Activated CD4-positive, alpha-beta T cell treated with anti-CD3 and anti-CD28 coated beads for 36 hours (primary cell): ENCODE measurements at regions of chr3 and their contacts with region 1.

Region 1: DNA sequence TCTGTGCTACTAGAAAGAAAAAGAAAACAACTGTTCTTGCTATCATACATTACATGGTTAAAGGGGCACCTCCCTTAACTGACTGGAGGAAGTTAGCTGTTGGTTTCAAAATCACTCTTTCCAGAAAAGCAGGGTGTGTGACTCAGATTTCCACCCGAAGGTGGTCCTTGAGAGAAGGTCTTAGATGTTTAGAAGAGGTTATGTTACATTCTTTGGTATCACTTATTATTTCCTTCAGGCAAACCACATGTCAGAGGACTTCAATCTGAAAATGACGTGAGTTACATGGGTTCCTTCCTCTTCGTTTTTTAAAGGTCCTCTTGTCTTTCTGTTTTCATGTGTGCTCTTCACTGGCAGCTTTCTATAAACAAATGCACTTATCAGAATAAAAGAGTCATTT is 307.9 kb upstream of the CBLB start:
- DNase-seq: peak; percentile 74
- ATAC-seq: peak; percentile 89
- H3K4me3 Mint-ChIP-seq: peak overlapping the region; percentile 52
- H3K27ac Mint-ChIP-seq: peak overlapping the region; percentile 92
- H3K4me1 Mint-ChIP-seq: peaks cover 66% of the 10 kb centered on the region
- H3K27me3 Mint-ChIP-seq: no peaks in the 10 kb centered on the region

Region 2: DNA sequence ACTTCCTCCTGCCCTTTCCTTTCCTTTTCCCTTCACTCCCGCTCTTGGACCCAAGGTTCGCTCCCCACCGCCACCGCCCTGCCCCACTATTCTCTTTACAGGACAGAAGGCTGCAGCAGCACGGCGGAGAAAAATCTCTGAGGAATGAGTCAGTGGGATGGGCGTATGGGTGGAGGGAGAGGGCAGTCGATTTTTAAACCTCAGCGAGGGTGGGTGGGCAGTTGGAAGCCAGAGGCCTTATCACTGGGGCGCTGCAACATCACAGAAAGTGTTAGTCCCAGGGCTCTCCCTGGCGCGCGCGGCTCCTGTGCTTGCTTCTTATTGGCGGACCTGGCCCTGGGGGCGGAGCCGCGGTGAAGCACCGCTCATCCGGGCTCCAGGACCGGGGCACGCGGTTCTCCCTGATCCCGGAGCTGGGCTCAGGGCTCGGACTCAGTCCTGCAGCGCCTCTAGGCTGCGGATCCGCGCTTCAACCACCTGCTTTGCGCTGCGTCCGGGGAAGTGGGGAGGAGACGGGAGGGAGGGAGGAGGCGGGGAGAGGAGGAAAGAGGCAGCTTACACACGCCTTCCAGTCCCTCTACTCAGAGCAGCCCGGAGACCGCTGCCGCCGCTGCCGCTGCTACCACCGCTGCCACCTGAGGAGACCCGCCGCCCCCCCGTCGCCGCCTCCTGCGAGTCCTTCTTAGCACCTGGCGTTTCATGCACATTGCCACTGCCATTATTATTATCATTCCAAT is 810.2 kb before region 1 on chr3 and contains the start of gene ALCAM:
- CTCF ChIA-PET with region 1: no interaction called
- POLR2A ChIA-PET with region 1: no interaction called
- intact Hi-C with region 1: loop called in 1 of 2 experiments (anchors 2 kb)
- DNase-seq: peak; percentile 92
- ATAC-seq: peak; percentile 64
- H3K4me3 Mint-ChIP-seq: peak within 1 kb of the TSS; percentile 94
- H3K27ac Mint-ChIP-seq: peak within 1 kb of the TSS; percentile 99
- H3K4me1 Mint-ChIP-seq: peaks cover 43% of the 10 kb centered on the region
- H3K27me3 Mint-ChIP-seq: peaks cover 23% of the 10 kb centered on the region
- total RNA-seq, gene ALCAM: 22.0 TPM

Region 3: GRCh38 chr3:105827959-105828358 is 348.8 kb before region 1 on chr3:
- CTCF ChIA-PET with region 1: no interaction called
- POLR2A ChIA-PET with region 1: no interaction called
- intact Hi-C with region 1: loop called (anchors 1 to 2 kb)
- DNase-seq: peak; percentile 36
- ATAC-seq: no peak
- H3K4me3 Mint-ChIP-seq: peak overlapping the region; percentile 57
- H3K27ac Mint-ChIP-seq: peak overlapping the region; percentile 100
- H3K4me1 Mint-ChIP-seq: peaks cover 88% of the 10 kb centered on the region
- H3K27me3 Mint-ChIP-seq: no peaks in the 10 kb centered on the region

Region 4: DNA sequence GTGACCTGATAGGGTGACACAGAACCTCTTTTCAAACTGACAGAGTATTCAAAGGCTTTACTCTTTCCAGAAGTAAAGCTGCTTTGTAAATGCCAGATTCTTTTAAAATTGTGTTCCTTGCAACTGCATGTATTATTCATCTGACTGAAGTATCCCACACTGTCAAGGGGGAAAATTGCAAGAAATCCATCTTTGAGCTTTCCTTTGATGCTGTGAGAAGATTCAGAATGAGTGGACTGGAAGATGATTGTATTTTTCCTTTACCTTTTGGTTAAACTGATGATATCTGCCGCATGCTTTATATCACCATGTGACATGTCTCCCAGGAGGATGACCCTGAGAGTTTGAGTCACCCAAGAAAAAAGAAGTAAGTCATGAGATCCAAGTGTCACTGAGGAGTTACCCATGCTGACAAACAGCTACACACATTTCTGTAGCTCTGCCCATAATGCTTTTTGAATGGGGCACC is 57.1 kb before region 1 on chr3:
- CTCF ChIA-PET with region 1: no interaction called
- POLR2A ChIA-PET with region 1: no interaction called
- intact Hi-C with region 1: loop called (anchors 1 kb)
- DNase-seq: peak; percentile 28
- ATAC-seq: peak; percentile 99
- H3K4me3 Mint-ChIP-seq: no peak overlapping the region
- H3K27ac Mint-ChIP-seq: peak overlapping the region; percentile 83
- H3K4me1 Mint-ChIP-seq: peaks cover 26% of the 10 kb centered on the region
- H3K27me3 Mint-ChIP-seq: no peaks in the 10 kb centered on the region

Region 5: DNA sequence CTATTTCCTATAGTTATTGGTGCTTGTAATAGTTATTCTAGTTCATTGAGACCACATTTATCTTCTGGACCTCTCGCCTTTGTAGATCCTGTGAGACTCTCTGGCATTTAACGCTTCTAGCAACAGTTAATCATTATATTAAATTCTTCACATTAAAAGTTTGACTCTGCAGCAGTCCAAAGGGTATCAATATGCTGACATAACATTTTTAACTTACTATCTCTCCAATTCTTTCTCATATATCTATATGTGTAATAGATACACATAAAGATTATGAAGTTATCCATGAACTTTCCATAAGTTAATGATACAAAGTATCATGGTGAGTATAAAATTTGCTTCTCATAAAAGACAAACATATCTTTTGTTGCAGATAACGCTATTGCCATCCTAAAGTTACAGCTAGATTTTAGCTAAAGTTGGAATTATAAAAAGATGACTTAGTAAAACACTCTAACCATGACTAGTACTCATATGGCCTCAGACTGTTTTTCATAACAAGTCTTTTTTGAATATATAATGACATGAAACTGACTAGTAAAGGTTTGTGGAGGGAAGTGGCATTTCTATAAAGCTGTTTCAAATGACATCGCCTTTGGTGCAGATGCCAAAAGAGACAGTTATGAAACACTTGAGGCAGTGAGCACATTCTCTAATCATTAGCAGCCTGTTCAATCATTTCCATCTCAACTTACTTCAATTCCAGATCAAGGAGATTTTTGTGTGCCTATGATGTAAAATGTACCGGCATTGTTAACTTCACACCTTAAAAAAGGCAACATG is 71.4 kb after region 1 on chr3:
- CTCF ChIA-PET with region 1: no interaction called
- POLR2A ChIA-PET with region 1: no interaction called
- intact Hi-C with region 1: loop called in 1 of 2 experiments (anchors 1 kb)
- DNase-seq: no peak
- ATAC-seq: peak; percentile 89
- H3K4me3 Mint-ChIP-seq: no peak overlapping the region
- H3K27ac Mint-ChIP-seq: no peak overlapping the region
- H3K4me1 Mint-ChIP-seq: peaks cover 11% of the 10 kb centered on the region
- H3K27me3 Mint-ChIP-seq: no peaks in the 10 kb centered on the region

Region 6: GRCh38 chr3:106428565-106428994 is 251.8 kb after region 1 on chr3:
- CTCF ChIA-PET with region 1: interaction called, 7 read pairs
- POLR2A ChIA-PET with region 1: no interaction called
- intact Hi-C with region 1: loop called (anchors 1 kb)
- DNase-seq: peak; percentile 73
- ATAC-seq: peak; percentile 82
- H3K4me3 Mint-ChIP-seq: no peak overlapping the region
- H3K27ac Mint-ChIP-seq: peak overlapping the region; percentile 98
- H3K4me1 Mint-ChIP-seq: peaks cover 49% of the 10 kb centered on the region
- H3K27me3 Mint-ChIP-seq: no peaks in the 10 kb centered on the region

Region 7: DNA sequence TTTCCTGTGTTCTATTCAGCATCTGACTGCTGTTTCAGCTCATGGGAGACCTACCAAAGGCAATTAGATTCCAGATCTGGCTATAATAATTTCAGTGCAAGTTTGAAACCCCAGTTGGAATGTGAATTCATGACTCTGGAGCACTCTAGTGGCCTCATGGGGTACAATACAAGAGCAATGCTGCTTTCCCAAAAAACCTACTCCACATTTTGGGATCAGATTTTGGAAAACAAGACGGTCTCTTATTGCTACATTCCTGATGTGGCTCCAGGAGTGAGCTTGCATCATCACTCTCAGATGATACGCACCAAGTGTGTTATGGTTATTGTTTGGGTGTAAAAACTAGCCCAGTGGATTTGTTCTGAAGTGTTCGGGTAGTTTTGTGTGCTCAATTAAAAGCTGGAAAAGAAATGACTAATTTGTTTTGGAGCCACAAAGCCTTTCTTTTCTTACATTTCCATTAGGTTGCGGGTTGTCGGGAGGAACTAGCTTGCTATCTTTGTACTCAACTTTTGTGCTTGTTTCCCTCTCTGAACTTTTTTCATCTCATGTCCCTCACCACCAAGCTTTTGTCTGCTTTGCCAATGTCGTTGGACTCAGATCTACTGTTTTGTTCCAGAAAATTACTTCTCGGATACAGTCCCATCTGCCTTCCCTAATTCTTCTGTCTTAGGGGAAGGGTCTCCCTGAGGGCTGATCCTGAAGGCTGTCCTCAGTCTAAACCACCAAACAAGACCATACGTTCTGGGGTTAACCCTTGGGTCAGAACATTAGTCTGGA is 1618.1 kb after region 1 on chr3:
- CTCF ChIA-PET with region 1: no interaction called
- POLR2A ChIA-PET with region 1: no interaction called
- intact Hi-C with region 1: no loop called
- DNase-seq: no peak
- ATAC-seq: no peak
- H3K4me3 Mint-ChIP-seq: no peak overlapping the region
- H3K27ac Mint-ChIP-seq: no peak overlapping the region
- H3K4me1 Mint-ChIP-seq: peaks cover 5% of the 10 kb centered on the region
- H3K27me3 Mint-ChIP-seq: no peaks in the 10 kb centered on the region